ENCODE measurements at regions of chr20 and their contacts with region 1.

Region 1: DNA sequence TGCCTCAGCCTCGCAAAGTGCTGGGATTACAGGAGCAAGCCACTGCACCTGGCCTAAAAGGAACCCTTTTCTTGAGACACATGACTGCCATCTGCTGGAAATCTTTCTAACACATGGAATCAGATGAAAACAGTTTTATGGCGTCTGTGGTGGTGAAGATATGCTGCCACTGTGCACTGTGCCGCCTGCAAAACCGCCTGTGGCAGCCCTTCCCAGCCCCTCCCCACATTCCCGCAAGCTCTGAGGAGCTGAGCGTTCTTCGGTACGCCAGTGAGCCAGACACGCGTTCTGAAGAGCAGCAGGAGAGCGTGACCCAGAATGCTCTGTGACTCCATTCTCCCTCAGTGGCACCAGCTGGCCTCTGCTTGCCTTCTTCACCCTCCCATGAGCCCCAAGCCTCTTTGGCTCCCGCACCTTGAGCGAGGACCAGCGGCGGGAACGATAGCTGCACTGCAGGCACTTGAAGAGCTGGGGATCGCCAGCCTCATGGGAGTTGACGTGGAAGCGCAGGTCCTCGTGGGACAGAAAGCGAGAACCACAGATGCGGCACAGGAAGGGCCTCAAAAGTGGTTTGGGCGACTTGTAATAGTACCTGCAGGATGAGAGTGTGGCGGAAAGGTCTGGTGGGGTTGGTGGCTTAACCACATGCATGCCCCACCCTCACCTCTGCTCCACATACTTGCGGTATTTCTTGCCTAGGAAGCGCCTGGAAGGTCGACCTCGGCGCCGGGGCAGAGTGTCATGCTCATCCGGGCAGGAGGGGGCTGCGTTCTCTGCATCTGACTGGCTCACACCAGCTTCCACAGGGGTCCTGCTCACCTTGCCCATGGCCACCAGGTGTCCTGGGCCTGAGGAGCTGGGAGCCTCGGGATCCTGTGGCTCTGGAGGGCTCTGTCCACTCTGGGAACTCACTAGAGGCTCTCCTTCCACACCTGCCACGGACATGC is 8.7 kb downstream of the ZNF335 start:
- DNase-seq: peak; percentile 56
- ATAC-seq: peak; percentile 11
- H3K4me3 ChIP-seq: no peak overlapping the region
- H3K4me3 Mint-ChIP-seq: no peak overlapping the region
- H3K27ac ChIP-seq: no peak overlapping the region
- H3K27ac Mint-ChIP-seq: peak overlapping the region; percentile 64
- H3K4me1 ChIP-seq: peaks cover 0 to 9% of the 10 kb centered on the region in 2 donors
- H3K4me1 Mint-ChIP-seq: peaks cover 10% of the 10 kb centered on the region
- H3K27me3 ChIP-seq: no peaks in the 10 kb centered on the region
- H3K27me3 Mint-ChIP-seq: no peaks in the 10 kb centered on the region
- CTCF ChIP-seq: no peak

Region 2: GRCh38 chr20:45823949-45824835 is 139.1 kb before region 1 on chr20:
- CTCF ChIA-PET with region 1: interaction called, 20 read pairs
- POLR2A ChIA-PET with region 1: no interaction called
- intact Hi-C with region 1: loop called (anchors 1 kb)
- DNase-seq: peak; percentile 77
- ATAC-seq: peak; percentile 83
- H3K4me3 ChIP-seq: peak overlapping the region in 4 of 5 experiments; percentile 2 to 51 (median 45)
- H3K4me3 Mint-ChIP-seq: peak overlapping the region; percentile 92
- H3K27ac ChIP-seq: no peak overlapping the region
- H3K27ac Mint-ChIP-seq: peak overlapping the region; percentile 86
- H3K4me1 ChIP-seq: peaks cover 17 to 23% of the 10 kb centered on the region in 2 donors
- H3K4me1 Mint-ChIP-seq: peaks cover 21% of the 10 kb centered on the region
- H3K27me3 ChIP-seq: peaks cover 0 to 21% (median 9%) of the 10 kb centered on the region in 4 experiments
- H3K27me3 Mint-ChIP-seq: peaks cover 23% of the 10 kb centered on the region
- CTCF ChIP-seq: no peak

Region 3: GRCh38 chr20:45981261-45981660 is 17.9 kb after region 1 on chr20:
- CTCF ChIA-PET with region 1: no interaction called
- POLR2A ChIA-PET with region 1: no interaction called
- intact Hi-C with region 1: no loop called
- DNase-seq: no peak
- ATAC-seq: no peak
- H3K4me3 ChIP-seq: no peak overlapping the region
- H3K4me3 Mint-ChIP-seq: no peak overlapping the region
- H3K27ac ChIP-seq: no peak overlapping the region
- H3K27ac Mint-ChIP-seq: no peak overlapping the region
- H3K4me1 ChIP-seq: no peaks in the 10 kb centered on the region
- H3K4me1 Mint-ChIP-seq: no peaks in the 10 kb centered on the region
- H3K27me3 ChIP-seq: peaks cover 0 to 8% (median 3%) of the 10 kb centered on the region in 4 experiments
- H3K27me3 Mint-ChIP-seq: peaks cover 8% of the 10 kb centered on the region
- CTCF ChIP-seq: no peak